ENCODE measurements at regions of chr2 and their contacts with region 1.

Region 1: GRCh38 chr2:206266130-206267125 is 8.0 kb upstream of the ZDBF2 start:
- DNase-seq: no peak
- H3K4me3 Mint-ChIP-seq: no peak overlapping the region
- H3K27ac Mint-ChIP-seq: no peak overlapping the region
- H3K4me1 Mint-ChIP-seq: peaks cover 3% of the 10 kb centered on the region
- H3K27me3 Mint-ChIP-seq: peaks cover 74% of the 10 kb centered on the region

Region 2: DNA sequence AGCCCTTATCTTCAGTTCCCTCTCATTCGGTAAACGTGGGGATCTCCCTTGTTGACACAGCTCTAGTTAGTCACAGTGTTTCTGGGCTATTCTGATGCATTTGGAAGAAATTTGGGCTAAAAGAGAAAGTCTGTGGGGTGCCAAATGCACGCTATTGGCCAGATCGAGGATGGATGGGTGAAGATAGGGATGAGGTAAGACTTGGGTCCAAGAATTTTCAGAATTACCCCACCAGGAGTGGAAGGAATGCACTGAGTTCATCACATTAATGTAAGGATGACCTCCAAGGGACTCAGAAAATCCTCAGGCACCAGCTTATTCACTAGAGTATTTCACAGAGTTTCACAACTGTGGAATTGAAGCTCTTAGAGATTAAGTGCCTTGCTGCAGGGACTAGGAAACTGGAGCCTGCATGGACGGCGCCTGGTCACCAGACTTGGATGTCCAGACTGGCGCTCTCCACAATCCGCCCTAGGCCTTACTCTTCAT is 534.8 kb before region 1 on chr2:
- intact Hi-C with region 1: no loop called
- DNase-seq: no peak
- H3K4me3 Mint-ChIP-seq: no peak overlapping the region
- H3K27ac Mint-ChIP-seq: no peak overlapping the region
- H3K4me1 Mint-ChIP-seq: no peaks in the 10 kb centered on the region
- H3K27me3 Mint-ChIP-seq: no peaks in the 10 kb centered on the region

Region 3: DNA sequence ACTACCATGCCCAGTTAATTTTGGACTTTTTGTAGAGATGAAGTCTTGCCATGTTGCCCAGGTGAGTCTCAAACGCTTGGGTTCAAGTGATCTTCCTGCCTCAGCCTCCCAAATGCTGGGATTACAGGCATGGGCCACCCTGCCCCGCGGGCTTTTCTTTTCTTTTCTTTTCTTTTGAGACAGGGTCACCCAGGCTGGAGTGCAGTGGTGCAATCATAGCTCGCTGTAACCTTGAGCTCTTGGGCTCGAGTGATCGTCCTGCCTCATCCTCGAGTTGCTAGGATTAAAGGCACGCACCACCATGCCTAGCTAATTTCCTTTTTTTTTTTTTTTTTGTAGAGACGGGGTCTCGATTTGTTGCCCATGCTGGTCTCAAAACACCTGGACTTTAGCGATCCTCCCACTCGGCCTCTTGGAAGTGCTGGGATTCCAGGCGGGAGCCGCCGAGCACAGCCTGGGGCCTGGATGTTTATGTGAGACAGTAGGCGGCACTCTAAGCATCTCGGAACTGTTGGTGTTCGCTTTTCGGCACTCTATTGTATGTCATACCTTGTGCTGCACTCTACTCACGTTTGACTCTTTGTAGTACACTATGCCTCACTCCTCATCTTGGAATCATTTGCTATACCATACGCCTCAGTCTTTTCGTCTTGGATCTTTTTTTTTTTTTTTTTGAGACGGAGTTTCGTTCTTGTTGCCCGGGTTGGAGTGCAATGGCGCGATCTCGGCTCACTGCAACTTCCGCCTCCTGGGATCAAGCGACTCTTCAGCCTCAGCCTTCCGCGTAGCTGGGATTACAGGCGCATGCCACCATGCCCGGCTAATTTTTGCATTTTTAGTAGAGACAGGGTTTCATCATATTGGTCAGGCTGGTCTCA is 16.5 kb before region 1 on chr2:
- intact Hi-C with region 1: loop called (anchors 2 kb)
- DNase-seq: no peak
- H3K4me3 Mint-ChIP-seq: peak overlapping the region; percentile 72
- H3K27ac Mint-ChIP-seq: no peak overlapping the region
- H3K4me1 Mint-ChIP-seq: peaks cover 11% of the 10 kb centered on the region
- H3K27me3 Mint-ChIP-seq: peaks cover 44% of the 10 kb centered on the region

Measured in activated T-helper 2 cell treated with anti-CD3 and anti-CD28 coated beads, Interferon-gamma antibody, Interleukin-2, Interleukin-4, amounts not matched to agents 10 μg/mL and 5 μg/mL and 100 μg/mL, durations not matched to agents 14 hours and 24 hours and 36 hours (primary cell).